Heart left ventricle (tissue), 16 donors: ENCODE measurements at regions of chr9 and their contacts with region 1.

Region 1: GRCh38 chr9:28365020-28365640 is 791.8 kb upstream of the C9orf72 start:
- DNase-seq: no peak
- ATAC-seq: no peak
- H3K4me3 ChIP-seq: no peak overlapping the region
- H3K27ac ChIP-seq: no peak overlapping the region
- H3K4me1 ChIP-seq: no peaks in the 10 kb centered on the region
- H3K27me3 ChIP-seq: no peaks in the 10 kb centered on the region
- CTCF ChIP-seq: no peak
- POLR2A ChIP-seq: no peak

Region 2: DNA sequence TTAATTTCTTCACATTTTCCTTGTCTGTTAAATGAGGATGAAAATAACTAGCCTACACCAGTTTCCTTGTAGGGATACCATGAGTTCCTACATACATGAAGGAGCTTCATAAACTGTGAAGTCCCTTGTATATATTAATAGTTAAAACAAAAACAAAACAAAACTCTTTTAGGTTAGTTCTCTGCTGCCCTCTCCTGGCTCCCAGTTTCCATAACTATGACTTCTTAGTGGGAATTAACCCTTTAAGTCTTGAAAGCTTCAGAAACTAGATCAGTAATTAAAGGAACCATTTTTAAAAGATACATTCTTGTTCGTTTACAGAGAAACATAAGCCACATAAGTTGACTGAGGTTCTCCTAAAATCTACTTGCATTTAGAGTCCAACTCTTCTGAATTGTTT is 291.9 kb before region 1 on chr9:
- intact Hi-C with region 1: no loop called
- DNase-seq: peak in 2 of 5 donors; percentile 6 to 16
- ATAC-seq: no peak
- H3K4me3 ChIP-seq: no peak overlapping the region
- H3K27ac ChIP-seq: no peak overlapping the region
- H3K4me1 ChIP-seq: no peaks in the 10 kb centered on the region
- H3K27me3 ChIP-seq: no peaks in the 10 kb centered on the region
- CTCF ChIP-seq: peak; percentile 10 to 55 (median 40)
- POLR2A ChIP-seq: no peak

Region 3: GRCh38 chr9:28317745-28318144 is 47.4 kb before region 1 on chr9:
- intact Hi-C with region 1: loop called in 1 of 10 experiments (anchors 5 kb)
- DNase-seq: no peak
- ATAC-seq: no peak
- H3K4me3 ChIP-seq: no peak overlapping the region
- H3K27ac ChIP-seq: no peak overlapping the region
- H3K4me1 ChIP-seq: no peaks in the 10 kb centered on the region
- H3K27me3 ChIP-seq: no peaks in the 10 kb centered on the region
- CTCF ChIP-seq: no peak
- POLR2A ChIP-seq: no peak